MCF 10A (cell line): ENCODE measurements at regions of chr12 and their contacts with region 1.

Region 1: DNA sequence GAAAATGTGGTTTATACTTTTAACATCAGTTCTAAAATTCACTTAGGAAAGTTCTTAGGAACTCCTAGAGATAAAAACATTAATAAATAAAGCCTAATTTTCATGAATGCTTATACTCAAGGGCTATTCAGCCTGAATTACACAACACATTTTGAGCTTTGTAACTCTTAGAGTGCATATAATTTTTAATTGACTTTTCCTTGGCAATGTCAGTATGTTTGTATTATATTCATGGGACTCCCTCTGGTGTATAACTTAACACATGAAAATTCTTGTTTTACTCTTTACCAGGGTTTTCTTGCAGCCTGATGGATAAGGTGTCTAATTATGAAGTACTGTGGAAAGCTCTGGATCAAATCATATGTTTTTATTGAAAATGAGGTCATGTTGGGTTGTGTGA is 150.6 kb upstream of the HMGA2 start:
- DNase-seq: peak; percentile 60
- H3K4me3 Mint-ChIP-seq: no peak overlapping the region
- H3K27ac Mint-ChIP-seq: peak overlapping the region; percentile 88
- H3K4me1 Mint-ChIP-seq: peaks cover 29% of the 10 kb centered on the region
- H3K27me3 Mint-ChIP-seq: no peaks in the 10 kb centered on the region
- CTCF ChIP-seq: peak; percentile 25

Region 2: GRCh38 chr12:65313719-65314317 is 359.9 kb before region 1 on chr12:
- CTCF ChIA-PET with region 1: interaction called, 7 read pairs
- POLR2A ChIA-PET with region 1: no interaction called
- intact Hi-C with region 1: loop called (anchors 1 kb)
- DNase-seq: peak; percentile 52
- H3K4me3 Mint-ChIP-seq: no peak overlapping the region
- H3K27ac Mint-ChIP-seq: no peak overlapping the region
- H3K4me1 Mint-ChIP-seq: peaks cover 12% of the 10 kb centered on the region
- H3K27me3 Mint-ChIP-seq: no peaks in the 10 kb centered on the region
- CTCF ChIP-seq: peak; percentile 66

Region 3: GRCh38 chr12:65495233-65495632 is 178.5 kb before region 1 on chr12:
- CTCF ChIA-PET with region 1: no interaction called
- POLR2A ChIA-PET with region 1: no interaction called
- intact Hi-C with region 1: no loop called
- DNase-seq: peak; percentile 54
- H3K4me3 Mint-ChIP-seq: no peak overlapping the region
- H3K27ac Mint-ChIP-seq: no peak overlapping the region
- H3K4me1 Mint-ChIP-seq: peaks cover 9% of the 10 kb centered on the region
- H3K27me3 Mint-ChIP-seq: no peaks in the 10 kb centered on the region
- CTCF ChIP-seq: no peak

Region 4: DNA sequence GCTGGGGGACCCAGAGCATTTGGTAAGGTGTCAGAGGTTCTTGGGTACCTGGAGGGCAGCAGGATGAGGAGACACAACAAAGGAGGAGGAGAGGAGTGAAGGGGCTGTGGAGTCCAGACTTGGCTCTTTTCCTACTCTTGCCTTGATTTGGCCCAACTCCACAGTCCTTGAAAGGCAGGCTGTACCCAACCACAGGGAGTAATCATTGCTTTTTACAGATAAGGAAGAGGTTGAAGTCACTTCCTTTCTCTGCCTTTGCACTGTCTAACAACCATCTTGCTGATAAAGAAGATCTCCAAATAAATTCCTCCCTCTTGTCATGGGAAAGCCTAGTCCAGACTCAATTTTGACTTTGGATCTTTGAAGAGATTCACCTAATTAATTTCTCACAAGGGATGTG is 76.2 kb before region 1 on chr12:
- CTCF ChIA-PET with region 1: interaction called, 76 read pairs
- POLR2A ChIA-PET with region 1: interaction called, 23 read pairs
- intact Hi-C with region 1: loop called (anchors 1 kb)
- DNase-seq: peak; percentile 14
- H3K4me3 Mint-ChIP-seq: no peak overlapping the region
- H3K27ac Mint-ChIP-seq: peak overlapping the region; percentile 90
- H3K4me1 Mint-ChIP-seq: peaks cover 56% of the 10 kb centered on the region
- H3K27me3 Mint-ChIP-seq: no peaks in the 10 kb centered on the region
- CTCF ChIP-seq: no peak

Region 5: GRCh38 chr12:65631621-65632111 is 42.1 kb before region 1 on chr12:
- CTCF ChIA-PET with region 1: interaction called, 5 read pairs
- POLR2A ChIA-PET with region 1: interaction called, 8 read pairs
- intact Hi-C with region 1: loop called (anchors 1 kb)
- DNase-seq: peak; percentile 100
- H3K4me3 Mint-ChIP-seq: peak overlapping the region; percentile 11
- H3K27ac Mint-ChIP-seq: peak overlapping the region; percentile 86
- H3K4me1 Mint-ChIP-seq: peaks cover 63% of the 10 kb centered on the region
- H3K27me3 Mint-ChIP-seq: no peaks in the 10 kb centered on the region
- CTCF ChIP-seq: no peak

Region 6: GRCh38 chr12:65800937-65801336 is 127.2 kb after region 1 on chr12:
- CTCF ChIA-PET with region 1: no interaction called
- POLR2A ChIA-PET with region 1: no interaction called
- intact Hi-C with region 1: no loop called
- DNase-seq: no peak
- H3K4me3 Mint-ChIP-seq: no peak overlapping the region
- H3K27ac Mint-ChIP-seq: no peak overlapping the region
- H3K4me1 Mint-ChIP-seq: no peaks in the 10 kb centered on the region
- H3K27me3 Mint-ChIP-seq: no peaks in the 10 kb centered on the region
- CTCF ChIP-seq: no peak

Region 7: DNA sequence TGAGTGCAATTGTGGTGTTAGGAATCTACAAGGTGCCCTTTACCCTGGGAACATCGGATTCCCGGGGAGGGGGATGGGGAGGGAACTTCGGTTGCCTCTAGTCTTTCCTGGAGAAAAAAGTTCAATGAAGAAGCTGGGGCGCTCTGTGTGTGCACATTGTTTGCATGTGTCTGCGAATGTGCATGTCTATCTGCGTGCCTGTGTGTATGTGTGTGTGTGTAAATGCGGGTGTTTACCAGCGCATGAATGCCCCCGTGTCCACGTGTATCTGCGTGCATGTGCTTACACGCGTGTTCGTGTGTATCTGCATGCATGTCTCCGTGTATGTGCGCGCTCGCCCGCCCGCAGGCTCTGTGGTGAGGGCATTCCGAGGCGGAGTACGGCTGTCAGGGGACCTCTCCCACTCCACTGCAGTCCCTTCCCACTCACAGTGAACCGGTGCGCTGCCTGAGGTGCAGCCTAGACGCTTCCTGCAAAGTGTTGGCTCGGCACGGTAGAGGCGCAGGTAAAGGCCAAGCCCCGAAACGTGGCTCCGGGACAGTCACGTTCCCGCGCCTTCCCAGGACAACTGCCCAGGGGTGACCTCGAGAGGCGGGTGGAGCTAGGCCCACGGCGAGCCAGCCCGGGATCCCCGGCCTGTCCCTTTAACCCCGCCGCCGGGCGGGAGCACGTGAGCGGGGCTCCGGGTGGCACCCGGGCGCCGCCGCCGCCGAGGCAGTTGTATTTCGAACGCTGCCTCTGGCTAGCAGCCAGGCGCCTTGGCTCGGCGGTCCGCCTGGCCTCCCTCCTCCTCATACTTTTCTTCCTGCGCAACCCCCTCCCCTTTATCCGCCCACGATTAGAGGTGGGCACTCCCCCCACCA is 150.0 kb after region 1 on chr12:
- CTCF ChIA-PET with region 1: interaction called, 5 read pairs
- POLR2A ChIA-PET with region 1: interaction called, 6 read pairs
- intact Hi-C with region 1: loop called (anchors 1 kb)
- DNase-seq: peak; percentile 85
- H3K4me3 Mint-ChIP-seq: peak overlapping the region; percentile 94
- H3K27ac Mint-ChIP-seq: peak overlapping the region; percentile 90
- H3K4me1 Mint-ChIP-seq: peaks cover 35% of the 10 kb centered on the region
- H3K27me3 Mint-ChIP-seq: no peaks in the 10 kb centered on the region
- CTCF ChIP-seq: no peak

Region 8: GRCh38 chr12:65867394-65867793 is 193.7 kb after region 1 on chr12:
- CTCF ChIA-PET with region 1: no interaction called
- POLR2A ChIA-PET with region 1: no interaction called
- intact Hi-C with region 1: no loop called
- DNase-seq: peak; percentile 85
- H3K4me3 Mint-ChIP-seq: peak overlapping the region; percentile 70
- H3K27ac Mint-ChIP-seq: peak overlapping the region; percentile 79
- H3K4me1 Mint-ChIP-seq: peaks cover 50% of the 10 kb centered on the region
- H3K27me3 Mint-ChIP-seq: no peaks in the 10 kb centered on the region
- CTCF ChIP-seq: no peak

Region 9: DNA sequence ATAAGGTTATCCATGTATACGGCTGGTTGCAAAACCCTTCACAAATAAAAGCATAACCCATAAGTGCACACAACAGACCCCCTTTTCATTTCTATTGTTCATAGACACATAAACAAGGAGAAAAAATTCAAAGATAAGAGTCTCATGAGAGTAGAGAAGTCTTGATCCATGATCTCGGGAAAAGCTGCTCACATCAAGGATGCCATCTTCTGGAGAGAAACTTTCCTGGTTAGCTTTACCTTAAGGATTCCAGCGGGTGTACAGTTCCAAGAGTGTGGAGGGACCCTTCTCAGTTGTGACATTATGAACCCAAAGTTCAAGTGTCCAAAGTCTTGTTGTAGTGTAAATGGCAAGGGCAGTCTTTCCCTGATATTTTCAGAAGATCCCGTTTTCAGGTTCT is 312.3 kb after region 1 on chr12:
- CTCF ChIA-PET with region 1: interaction called, 3 read pairs
- POLR2A ChIA-PET with region 1: no interaction called
- intact Hi-C with region 1: loop called (anchors 2 kb)
- DNase-seq: no peak
- H3K4me3 Mint-ChIP-seq: no peak overlapping the region
- H3K27ac Mint-ChIP-seq: no peak overlapping the region
- H3K4me1 Mint-ChIP-seq: peaks cover 5% of the 10 kb centered on the region
- H3K27me3 Mint-ChIP-seq: no peaks in the 10 kb centered on the region
- CTCF ChIP-seq: no peak